ENCODE measurements at regions of chr19 and their contacts with region 1.

Region 1: DNA sequence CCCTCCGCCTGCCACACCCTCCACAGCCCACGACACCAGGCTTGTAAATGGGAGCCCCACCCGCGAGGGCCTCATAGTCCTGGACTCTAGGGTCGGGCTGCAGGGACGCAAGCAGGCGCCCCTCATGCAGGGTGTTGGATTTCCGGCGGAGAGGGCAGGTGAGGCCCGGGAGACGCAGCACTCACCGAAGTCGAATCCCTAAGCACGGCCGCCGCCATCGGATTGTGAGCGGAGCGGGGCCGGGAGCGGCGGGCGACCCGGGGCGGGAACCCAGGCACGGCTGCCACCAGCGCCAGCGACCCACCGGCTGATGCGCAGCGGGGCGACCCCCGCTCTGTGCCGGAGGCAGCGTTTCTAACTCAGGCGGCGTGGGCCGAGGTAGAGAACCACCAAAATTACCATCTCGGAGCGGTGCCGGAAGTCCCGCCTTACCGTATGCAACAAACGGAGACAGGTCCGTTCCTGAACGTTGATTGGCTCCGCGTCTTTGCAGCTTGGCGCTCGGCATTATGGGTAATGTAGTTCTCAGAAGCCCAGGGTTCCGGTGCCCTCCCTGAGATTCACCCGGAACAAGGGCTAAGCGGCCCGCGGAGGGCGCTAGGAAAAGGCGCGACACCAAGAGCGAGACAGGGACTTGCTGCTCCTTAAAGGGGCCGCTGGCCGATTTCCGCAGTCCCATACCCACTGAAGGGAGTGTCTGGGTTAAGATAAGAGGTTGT is at the start of gene ZNF416:
- DNase-seq: peak; percentile 97
- ATAC-seq: peak; percentile 96
- H3K4me3 Mint-ChIP-seq: peak within 1 kb of the TSS; percentile 77
- H3K27ac Mint-ChIP-seq: peak within 1 kb of the TSS; percentile 77
- H3K4me1 Mint-ChIP-seq: peaks cover 23% of the 10 kb centered on the region
- H3K27me3 Mint-ChIP-seq: no peaks in the 10 kb centered on the region
- total RNA-seq, gene ZNF416: 3.3 to 3.7 TPM

Region 2: DNA sequence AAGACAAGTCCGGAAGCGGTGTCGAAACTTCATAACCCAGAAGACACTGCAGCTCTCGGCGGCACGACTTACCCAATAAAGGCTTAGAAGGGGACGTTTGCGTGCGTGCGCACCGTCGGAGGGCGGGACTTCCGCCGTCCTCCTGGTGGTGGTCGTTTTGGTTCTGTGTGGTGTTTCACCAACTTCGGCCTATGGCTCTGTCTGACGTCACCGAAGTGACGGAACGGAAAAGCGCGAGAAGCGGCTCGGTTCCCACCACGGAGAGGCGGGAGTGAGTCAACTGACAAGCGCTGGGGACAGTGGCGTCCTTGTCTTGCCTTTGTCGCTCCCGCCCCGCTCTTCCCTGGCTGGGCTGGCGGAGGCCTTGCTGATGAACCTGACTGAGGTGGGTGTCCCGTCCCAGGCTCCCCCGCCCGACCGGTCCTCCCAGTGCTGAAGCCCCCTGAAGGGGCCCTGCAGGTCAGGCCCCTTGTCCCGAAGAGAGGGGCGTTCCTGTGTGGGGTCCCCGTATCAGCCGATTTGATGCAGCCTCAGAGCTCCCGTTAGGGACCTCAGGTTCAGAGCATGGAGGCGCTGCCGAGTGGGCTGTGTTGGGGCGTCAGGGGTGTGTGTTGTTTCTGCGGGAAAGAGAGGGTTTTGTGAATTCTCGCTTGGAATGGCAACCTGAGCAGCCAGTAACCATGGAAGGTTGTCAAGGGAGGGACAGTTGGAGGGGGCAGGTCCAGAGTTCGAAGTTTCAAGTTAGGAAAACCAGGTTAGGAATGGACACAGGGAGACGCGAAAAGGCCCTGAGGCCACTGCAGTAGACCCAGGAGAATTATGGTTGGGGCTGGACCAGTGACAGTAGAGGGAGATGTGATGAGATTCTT is 188.7 kb before region 1 on chr19 and contains the start of gene ZNF548:
- CTCF ChIA-PET with region 1: no interaction called
- POLR2A ChIA-PET with region 1: no interaction called
- intact Hi-C with region 1: loop called (anchors 1 kb)
- DNase-seq: peak; percentile 97
- ATAC-seq: peak; percentile 99
- H3K4me3 Mint-ChIP-seq: peak within 1 kb of the TSS; percentile 90
- H3K27ac Mint-ChIP-seq: peak within 1 kb of the TSS; percentile 94
- H3K4me1 Mint-ChIP-seq: peaks cover 26% of the 10 kb centered on the region
- H3K27me3 Mint-ChIP-seq: no peaks in the 10 kb centered on the region
- total RNA-seq, gene ZNF548: 15.1 to 20.3 TPM

Region 3: DNA sequence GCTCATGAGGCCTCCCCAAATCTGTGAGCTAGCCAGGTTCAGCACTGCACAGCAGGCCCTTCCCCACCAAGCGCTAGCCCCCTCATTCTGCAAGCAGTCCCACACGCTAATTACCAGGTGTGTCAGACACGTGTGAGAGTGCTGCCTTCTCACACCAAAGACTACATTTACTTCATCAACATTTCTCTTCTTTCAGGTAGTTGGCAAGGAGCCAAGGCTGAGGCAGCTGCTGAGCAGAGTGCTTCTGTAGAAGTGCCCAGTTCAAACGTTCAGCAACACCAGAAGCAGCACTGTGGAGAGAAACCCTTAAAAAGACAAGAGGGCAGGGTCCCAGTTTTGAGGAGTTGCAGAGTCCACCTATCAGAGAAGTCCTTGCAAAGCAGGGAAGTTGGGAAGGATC is 72.5 kb before region 1 on chr19:
- CTCF ChIA-PET with region 1: no interaction called
- POLR2A ChIA-PET with region 1: no interaction called
- intact Hi-C with region 1: no loop called
- DNase-seq: no peak
- ATAC-seq: no peak
- H3K4me3 Mint-ChIP-seq: no peak overlapping the region
- H3K27ac Mint-ChIP-seq: no peak overlapping the region
- H3K4me1 Mint-ChIP-seq: peaks cover 6% of the 10 kb centered on the region
- H3K27me3 Mint-ChIP-seq: no peaks in the 10 kb centered on the region

Region 4: GRCh38 chr19:57527136-57527881 is 51.3 kb before region 1 on chr19 and contains the start of gene ZNF549:
- CTCF ChIA-PET with region 1: no interaction called
- POLR2A ChIA-PET with region 1: no interaction called
- intact Hi-C with region 1: loop called (anchors 1 kb)
- DNase-seq: peak; percentile 93
- ATAC-seq: peak; percentile 100
- H3K4me3 Mint-ChIP-seq: peak within 1 kb of the TSS; percentile 82
- H3K27ac Mint-ChIP-seq: peak within 1 kb of the TSS; percentile 84
- H3K4me1 Mint-ChIP-seq: peaks cover 18% of the 10 kb centered on the region
- H3K27me3 Mint-ChIP-seq: no peaks in the 10 kb centered on the region
- total RNA-seq, gene ZNF549: 3.7 to 4.6 TPM

Region 5: GRCh38 chr19:57599761-57600383 is 21.2 kb after region 1 on chr19 and contains the start of gene ZNF530:
- CTCF ChIA-PET with region 1: no interaction called
- POLR2A ChIA-PET with region 1: no interaction called
- intact Hi-C with region 1: loop called (anchors 1 kb)
- DNase-seq: peak; percentile 95
- ATAC-seq: peak; percentile 98
- H3K4me3 Mint-ChIP-seq: peak within 1 kb of the TSS; percentile 81
- H3K27ac Mint-ChIP-seq: peak within 1 kb of the TSS; percentile 79
- H3K4me1 Mint-ChIP-seq: peaks cover 12% of the 10 kb centered on the region
- H3K27me3 Mint-ChIP-seq: no peaks in the 10 kb centered on the region
- total RNA-seq, gene ZNF530: 7.1 to 7.2 TPM

Region 6: GRCh38 chr19:57664269-57665127 is 85.9 kb after region 1 on chr19:
- CTCF ChIA-PET with region 1: no interaction called
- POLR2A ChIA-PET with region 1: no interaction called
- intact Hi-C with region 1: no loop called
- DNase-seq: peak; percentile 24
- ATAC-seq: peak; percentile 47
- H3K4me3 Mint-ChIP-seq: peak overlapping the region; percentile 70
- H3K27ac Mint-ChIP-seq: no peak overlapping the region
- H3K4me1 Mint-ChIP-seq: peaks cover 3% of the 10 kb centered on the region
- H3K27me3 Mint-ChIP-seq: peaks cover 36% of the 10 kb centered on the region

Region 7: DNA sequence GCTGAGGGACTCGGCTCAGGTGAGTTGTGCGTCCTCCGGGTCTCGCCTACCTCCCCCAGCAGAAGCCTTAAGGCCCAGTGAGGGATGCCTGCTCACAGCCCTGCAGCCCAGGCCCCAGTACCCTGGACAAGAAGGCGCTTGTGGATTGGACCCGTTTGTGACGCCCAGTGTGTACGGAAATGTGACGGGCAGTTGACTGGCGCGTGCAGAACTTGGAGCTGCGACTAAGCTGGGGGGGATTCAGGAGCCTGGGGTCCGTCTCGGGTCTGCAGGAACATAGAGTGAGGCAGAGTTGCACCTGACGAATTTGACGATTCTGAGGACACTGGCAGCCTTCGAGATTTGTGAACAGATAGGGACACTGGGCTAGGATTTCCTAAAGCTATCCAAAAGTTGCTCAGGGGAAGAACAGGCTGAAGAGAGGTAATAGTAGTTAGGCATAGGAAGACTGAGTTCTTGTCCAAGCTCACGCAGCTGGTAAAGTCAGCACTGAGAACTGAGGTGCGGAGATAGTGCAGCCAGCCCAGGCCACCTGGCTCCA is 103.7 kb after region 1 on chr19:
- CTCF ChIA-PET with region 1: no interaction called
- POLR2A ChIA-PET with region 1: no interaction called
- intact Hi-C with region 1: loop called in 1 of 2 experiments (anchors 1 kb)
- DNase-seq: no peak
- ATAC-seq: no peak
- H3K4me3 Mint-ChIP-seq: peak overlapping the region; percentile 85
- H3K27ac Mint-ChIP-seq: peak overlapping the region; percentile 93
- H3K4me1 Mint-ChIP-seq: peaks cover 31% of the 10 kb centered on the region
- H3K27me3 Mint-ChIP-seq: peaks cover under 1% of the 10 kb centered on the region

Region 8: GRCh38 chr19:57947208-57948134 is 368.8 kb after region 1 on chr19 and contains the start of gene ZNF256:
- CTCF ChIA-PET with region 1: no interaction called
- POLR2A ChIA-PET with region 1: no interaction called
- intact Hi-C with region 1: loop called in 1 of 2 experiments (anchors 1 kb)
- DNase-seq: peak; percentile 95
- ATAC-seq: peak; percentile 99
- H3K4me3 Mint-ChIP-seq: peak within 1 kb of the TSS; percentile 87
- H3K27ac Mint-ChIP-seq: peak within 1 kb of the TSS; percentile 90
- H3K4me1 Mint-ChIP-seq: peaks cover 16% of the 10 kb centered on the region
- H3K27me3 Mint-ChIP-seq: no peaks in the 10 kb centered on the region
- total RNA-seq, gene ZNF256: 6.3 to 6.9 TPM